Heart right ventricle (tissue), 16 donors: ENCODE measurements at regions of chr2 and their contacts with region 1.

Region 1: DNA sequence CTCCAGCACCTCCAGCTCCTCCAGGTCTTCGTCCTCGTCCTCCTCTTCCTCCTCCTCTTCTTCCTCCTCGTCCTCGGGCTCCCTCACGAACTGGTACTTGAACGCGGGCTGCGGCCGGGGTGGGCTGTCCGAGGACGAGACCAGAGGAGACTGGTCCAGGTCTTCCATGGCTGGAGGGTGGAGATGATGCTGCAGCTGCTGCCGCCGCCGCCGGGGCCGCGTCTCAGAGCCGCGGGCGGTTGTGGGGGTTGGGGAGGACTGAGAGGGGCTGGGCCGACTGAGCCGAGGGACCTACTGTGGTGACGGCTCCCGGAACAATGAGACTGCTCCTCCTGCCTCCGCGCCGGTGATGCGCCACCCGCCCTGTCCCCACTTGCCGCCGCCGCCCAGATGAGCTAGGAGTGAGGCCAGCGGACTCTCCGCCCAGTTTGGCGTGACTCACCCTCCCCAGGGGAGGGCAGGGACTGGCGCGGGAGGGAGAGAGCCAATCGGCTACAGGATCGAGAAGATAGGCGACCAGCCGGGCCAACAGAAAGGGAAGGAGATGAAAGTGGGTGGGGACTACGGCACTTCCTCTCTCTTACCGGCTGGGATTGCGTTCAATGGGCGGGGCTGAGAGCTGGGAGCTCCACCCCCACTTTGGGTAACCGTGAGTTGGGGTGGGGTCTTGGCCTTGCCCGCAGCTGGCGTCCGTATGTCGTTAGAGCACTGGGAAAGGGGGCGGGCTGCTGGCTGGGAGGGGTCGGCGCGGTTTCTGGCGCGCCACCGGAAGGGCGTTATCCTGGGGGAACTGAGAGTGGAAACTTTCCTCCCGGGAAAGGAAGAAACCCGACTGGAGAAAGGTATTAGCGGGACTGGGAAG is at the start of gene RTN4:
- DNase-seq: peak; percentile 98 to 99
- ATAC-seq: peak; percentile 93 to 98 (median 94)
- H3K4me3 ChIP-seq: peak within 1 kb of the TSS; percentile 73 to 91 (median 84)
- H3K27ac ChIP-seq: peak within 1 kb of the TSS; percentile 90 to 99 (median 98)
- H3K4me1 ChIP-seq: peaks cover 0 to 52% (median 38%) of the 10 kb centered on the region in 9 donors
- H3K27me3 ChIP-seq: no peaks in the 10 kb centered on the region
- CTCF ChIP-seq: peak in 3 of 9 donors; percentile 5 to 30 (median 14)
- total RNA-seq, gene RTN4: 40.6 to 163 (median 95.3) TPM

Region 2: GRCh38 chr2:55010149-55010591 is 40.2 kb before region 1 on chr2:
- intact Hi-C with region 1: loop called in 3 of 10 experiments (anchors 5 kb)
- DNase-seq: peak in 1 of 2 donors; percentile 43
- ATAC-seq: peak in 7 of 8 donors; percentile 80 to 92 (median 88)
- H3K4me3 ChIP-seq: peak overlapping the region in 8 of 10 donors; percentile 8 to 46 (median 41)
- H3K27ac ChIP-seq: peak overlapping the region in 5 of 10 donors; percentile 11 to 71 (median 29)
- H3K4me1 ChIP-seq: peaks cover 0 to 88% (median 79%) of the 10 kb centered on the region in 9 donors
- H3K27me3 ChIP-seq: no peaks in the 10 kb centered on the region
- CTCF ChIP-seq: no peak

Region 3: DNA sequence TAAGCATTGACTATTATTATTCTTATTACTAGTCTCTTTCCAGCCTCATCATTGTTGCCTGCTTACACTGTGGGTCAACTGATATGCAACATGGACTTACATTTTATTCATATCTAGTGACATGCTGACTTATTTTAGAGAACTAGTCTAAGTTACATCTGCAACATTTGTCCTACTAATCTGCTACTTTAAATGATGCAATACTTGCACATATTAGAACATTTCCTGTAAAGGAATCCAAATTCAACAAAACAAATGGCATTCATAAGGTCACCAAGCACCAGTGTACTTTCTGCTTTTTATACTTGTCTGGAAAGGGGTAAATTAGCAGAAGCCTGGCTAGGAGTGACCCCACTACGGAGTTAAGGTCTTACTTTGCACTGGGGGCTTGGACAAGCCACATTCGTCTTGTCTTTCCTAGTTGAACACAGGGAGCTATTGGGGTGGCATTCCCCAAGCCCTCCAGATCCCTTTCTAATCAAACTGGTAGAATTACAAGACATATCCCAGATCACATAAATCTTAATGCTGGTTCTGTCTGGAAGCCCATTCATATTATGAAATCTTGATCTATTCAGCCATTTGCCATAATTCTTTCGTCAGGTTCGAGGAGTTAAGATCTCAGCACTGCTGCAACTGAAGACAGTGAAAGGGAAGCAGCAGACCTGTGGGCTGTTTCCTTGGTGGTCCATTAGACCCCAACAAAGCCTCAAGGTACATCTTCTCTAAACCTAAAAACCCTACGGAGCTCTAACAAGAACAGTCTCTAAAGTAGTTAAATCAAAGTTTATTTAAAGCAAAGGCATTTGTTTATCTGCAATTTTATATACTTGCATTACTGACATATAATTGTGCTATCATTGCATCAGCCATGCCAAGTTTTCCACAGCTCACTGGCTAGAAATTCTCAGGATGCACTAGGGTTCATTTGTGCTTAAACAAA is 49.8 kb after region 1 on chr2:
- intact Hi-C with region 1: loop called in 3 of 10 experiments (anchors 5 to 10 kb)
- DNase-seq: no peak
- ATAC-seq: peak; percentile 50 to 82 (median 64)
- H3K4me3 ChIP-seq: no peak overlapping the region
- H3K27ac ChIP-seq: peak overlapping the region; percentile 47 to 86 (median 62)
- H3K4me1 ChIP-seq: peaks cover 4 to 68% (median 46%) of the 10 kb centered on the region in 9 donors
- H3K27me3 ChIP-seq: no peaks in the 10 kb centered on the region
- CTCF ChIP-seq: no peak

Region 4: DNA sequence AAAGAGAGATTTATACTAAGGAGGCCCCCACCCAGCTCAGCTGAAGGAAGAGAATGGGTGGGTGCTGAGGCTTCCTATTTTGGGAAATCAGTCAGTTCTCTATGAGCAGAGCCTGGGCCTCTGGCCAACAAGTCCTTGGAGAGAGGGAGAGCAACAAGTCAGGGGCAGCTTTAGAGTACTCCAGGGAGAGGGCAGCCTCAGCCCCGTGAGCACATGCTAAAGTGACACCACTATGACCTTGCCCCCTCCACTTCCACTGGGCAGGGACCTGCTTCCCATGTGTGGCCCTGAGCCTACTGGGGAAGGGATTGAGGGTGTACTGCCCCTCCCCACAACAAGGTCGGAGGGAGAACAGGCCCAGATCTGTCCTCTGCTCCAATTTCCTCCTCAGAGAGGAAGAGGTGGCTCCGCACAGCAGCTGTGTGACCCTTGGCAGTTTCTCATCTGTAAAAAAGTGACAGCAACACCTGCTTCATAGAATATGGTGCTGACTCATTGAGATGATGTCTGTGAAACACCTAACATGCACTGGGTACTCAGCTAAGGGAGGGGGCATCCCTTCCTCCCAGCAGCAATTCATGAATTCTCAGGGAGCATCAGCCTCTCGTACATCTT is 108.8 kb after region 1 on chr2:
- intact Hi-C with region 1: loop called in 5 of 10 experiments (anchors 5 to 10 kb)
- DNase-seq: peak; percentile 65 to 76
- ATAC-seq: peak; percentile 58 to 90 (median 74)
- H3K4me3 ChIP-seq: no peak overlapping the region
- H3K27ac ChIP-seq: peak overlapping the region in 8 of 10 donors; percentile 7 to 62 (median 26)
- H3K4me1 ChIP-seq: peaks cover 22 to 83% (median 50%) of the 10 kb centered on the region in 9 donors
- H3K27me3 ChIP-seq: no peaks in the 10 kb centered on the region
- CTCF ChIP-seq: no peak

Region 5: DNA sequence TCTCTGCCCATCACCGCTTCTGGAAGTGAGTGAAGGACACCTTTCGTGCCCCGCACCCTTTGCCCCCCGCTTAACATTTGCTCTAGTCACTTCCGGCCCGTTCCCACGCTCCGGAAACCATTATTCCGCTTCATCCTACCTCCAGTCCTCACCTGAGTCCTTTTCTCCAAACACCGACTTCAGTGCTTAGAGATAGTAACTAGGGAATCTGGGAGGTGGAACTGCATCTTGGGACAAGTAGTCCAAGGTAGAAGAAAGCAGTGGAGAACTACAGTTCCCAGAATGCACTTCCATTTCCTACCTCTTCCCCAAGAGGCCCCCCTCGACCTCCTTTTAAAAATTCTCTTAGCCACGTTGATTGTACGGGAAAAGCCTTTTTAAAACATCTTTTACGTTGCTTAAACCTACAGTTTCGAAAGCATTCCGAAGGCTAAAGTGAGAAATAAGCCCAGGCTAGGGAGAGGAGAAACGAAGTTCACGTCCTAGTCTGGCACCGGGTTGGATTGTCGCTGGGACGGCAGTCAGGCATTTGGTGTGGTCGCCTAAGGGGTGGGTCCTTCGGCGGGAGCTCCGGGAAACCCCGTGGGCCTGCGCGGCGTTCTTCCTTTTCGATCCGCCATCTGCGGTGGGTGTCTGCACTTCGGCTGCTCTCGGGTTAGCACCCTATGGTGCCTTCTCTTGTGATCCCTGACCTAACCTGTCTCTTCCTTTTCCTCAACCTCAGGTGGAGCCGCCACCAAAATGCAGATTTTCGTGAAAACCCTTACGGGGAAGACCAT is 181.9 kb after region 1 on chr2 and contains the starts of genes CLHC1 and RPS27A:
- intact Hi-C with region 1: loop called in 1 of 10 experiments (anchors 1 kb)
- DNase-seq: peak; percentile 93 to 94
- ATAC-seq: peak; percentile 93 to 98 (median 96)
- H3K4me3 ChIP-seq: peak within 1 kb of the TSS; percentile 62 to 98 (median 88)
- H3K27ac ChIP-seq: peak within 1 kb of the TSS; percentile 80 to 98 (median 94)
- H3K4me1 ChIP-seq: peaks cover 0 to 49% (median 43%) of the 10 kb centered on the region in 9 donors
- H3K27me3 ChIP-seq: no peaks in the 10 kb centered on the region
- CTCF ChIP-seq: peak in 1 of 9 donors; percentile 2
- total RNA-seq, gene CLHC1: 4.0 to 9.0 (median 6.3) TPM
- total RNA-seq, gene RPS27A: 365 to 520 (median 408) TPM